IMR-90 (cell line): ENCODE measurements at regions of chr6 and their contacts with region 1.

Region 1: GRCh38 chr6:113122060-113122459 is 735.1 kb upstream of the MARCKS start:
- DNase-seq: peak; percentile 87
- ATAC-seq: peak; percentile 79
- H3K4me3 ChIP-seq: no peak overlapping the region
- H3K27ac ChIP-seq: no peak overlapping the region
- H3K4me1 ChIP-seq: peaks cover 13% of the 10 kb centered on the region
- H3K27me3 ChIP-seq: no peaks in the 10 kb centered on the region
- CTCF ChIP-seq: peak; percentile 56
- POLR2A ChIP-seq: no peak
- RAD21 ChIP-seq: peak; percentile 76

Region 2: DNA sequence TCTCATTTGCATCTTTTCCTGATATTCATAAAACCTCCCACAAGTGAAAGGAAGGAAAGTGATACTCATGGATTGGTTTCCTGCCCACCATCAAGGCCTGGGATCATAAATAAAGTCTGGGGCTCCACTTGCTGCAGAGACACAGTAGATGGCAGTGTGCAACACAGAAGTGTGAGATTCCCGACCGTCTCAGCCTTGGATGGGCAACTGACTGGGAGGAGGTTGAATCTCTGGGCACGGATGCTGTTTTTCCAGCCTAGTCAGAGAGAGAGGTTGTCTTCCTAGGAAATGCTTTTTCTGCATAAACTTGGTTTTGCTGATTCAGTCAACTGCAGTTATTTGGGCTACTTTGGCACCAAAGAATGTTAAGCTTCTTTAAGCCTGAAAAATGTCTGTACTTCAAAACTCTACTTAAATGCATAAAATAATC is 784.8 kb before region 1 on chr6:
- CTCF ChIA-PET with region 1: no interaction called
- POLR2A ChIA-PET with region 1: no interaction called
- dilution Hi-C with region 1: no loop called
- in situ Hi-C with region 1: no loop called
- intact Hi-C with region 1: loop called (anchors 1 kb)
- DNase-seq: peak; percentile 83
- ATAC-seq: peak; percentile 91
- H3K4me3 ChIP-seq: no peak overlapping the region
- H3K27ac ChIP-seq: no peak overlapping the region
- H3K4me1 ChIP-seq: peaks cover 4% of the 10 kb centered on the region
- H3K27me3 ChIP-seq: no peaks in the 10 kb centered on the region
- CTCF ChIP-seq: peak; percentile 78
- POLR2A ChIP-seq: no peak
- RAD21 ChIP-seq: peak; percentile 80

Region 3: DNA sequence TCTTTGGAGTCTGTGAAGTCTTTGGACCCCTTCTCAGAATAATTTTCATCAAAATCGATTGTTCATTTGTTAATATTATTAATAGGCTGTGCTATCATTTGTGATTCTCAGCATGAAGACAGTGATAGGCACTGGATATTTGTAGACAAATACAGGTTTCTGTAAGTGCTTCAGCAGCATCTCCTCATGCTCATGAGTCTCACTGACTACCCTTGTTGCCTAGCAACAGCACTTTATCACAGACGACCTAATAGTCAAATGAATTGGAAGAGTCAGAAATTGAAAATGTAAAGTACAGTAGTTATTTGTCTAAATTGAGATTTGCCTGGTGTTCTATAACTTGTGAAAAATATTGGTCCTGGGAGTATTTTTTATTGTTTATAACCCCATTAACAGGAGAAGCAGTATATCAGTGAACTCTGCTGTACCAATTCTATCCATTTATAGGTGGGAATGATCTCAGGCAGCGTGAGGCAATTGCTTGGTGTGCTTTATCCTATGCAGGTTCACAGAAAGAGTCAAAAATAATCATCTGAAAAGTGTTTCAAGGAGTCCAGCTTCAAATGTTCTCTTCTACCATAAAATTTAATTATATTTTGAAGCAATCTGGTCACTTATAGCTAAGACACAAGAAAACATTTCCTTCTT is 90.3 kb before region 1 on chr6:
- CTCF ChIA-PET with region 1: no interaction called
- POLR2A ChIA-PET with region 1: no interaction called
- dilution Hi-C with region 1: no loop called
- in situ Hi-C with region 1: no loop called
- intact Hi-C with region 1: no loop called
- DNase-seq: no peak
- ATAC-seq: no peak
- H3K4me3 ChIP-seq: no peak overlapping the region
- H3K27ac ChIP-seq: no peak overlapping the region
- H3K4me1 ChIP-seq: no peaks in the 10 kb centered on the region
- H3K27me3 ChIP-seq: no peaks in the 10 kb centered on the region
- CTCF ChIP-seq: no peak
- POLR2A ChIP-seq: no peak
- RAD21 ChIP-seq: no peak

Region 4: GRCh38 chr6:113160306-113161017 is 38.4 kb after region 1 on chr6:
- CTCF ChIA-PET with region 1: no interaction called
- POLR2A ChIA-PET with region 1: no interaction called
- dilution Hi-C with region 1: no loop called
- in situ Hi-C with region 1: no loop called
- intact Hi-C with region 1: no loop called
- DNase-seq: no peak
- ATAC-seq: no peak
- H3K4me3 ChIP-seq: no peak overlapping the region
- H3K27ac ChIP-seq: no peak overlapping the region
- H3K4me1 ChIP-seq: no peaks in the 10 kb centered on the region
- H3K27me3 ChIP-seq: no peaks in the 10 kb centered on the region
- CTCF ChIP-seq: no peak
- POLR2A ChIP-seq: no peak
- RAD21 ChIP-seq: no peak

Region 5: GRCh38 chr6:113381959-113382358 is 259.9 kb after region 1 on chr6:
- CTCF ChIA-PET with region 1: no interaction called
- POLR2A ChIA-PET with region 1: no interaction called
- dilution Hi-C with region 1: no loop called
- in situ Hi-C with region 1: no loop called
- intact Hi-C with region 1: loop called (anchors 5 kb)
- DNase-seq: peak; percentile 75
- ATAC-seq: no peak
- H3K4me3 ChIP-seq: no peak overlapping the region
- H3K27ac ChIP-seq: no peak overlapping the region; the same call in 1 of the 2 replicates
- H3K4me1 ChIP-seq: peaks cover 9% of the 10 kb centered on the region
- H3K27me3 ChIP-seq: no peaks in the 10 kb centered on the region
- CTCF ChIP-seq: no peak
- POLR2A ChIP-seq: no peak
- RAD21 ChIP-seq: no peak

Region 6: DNA sequence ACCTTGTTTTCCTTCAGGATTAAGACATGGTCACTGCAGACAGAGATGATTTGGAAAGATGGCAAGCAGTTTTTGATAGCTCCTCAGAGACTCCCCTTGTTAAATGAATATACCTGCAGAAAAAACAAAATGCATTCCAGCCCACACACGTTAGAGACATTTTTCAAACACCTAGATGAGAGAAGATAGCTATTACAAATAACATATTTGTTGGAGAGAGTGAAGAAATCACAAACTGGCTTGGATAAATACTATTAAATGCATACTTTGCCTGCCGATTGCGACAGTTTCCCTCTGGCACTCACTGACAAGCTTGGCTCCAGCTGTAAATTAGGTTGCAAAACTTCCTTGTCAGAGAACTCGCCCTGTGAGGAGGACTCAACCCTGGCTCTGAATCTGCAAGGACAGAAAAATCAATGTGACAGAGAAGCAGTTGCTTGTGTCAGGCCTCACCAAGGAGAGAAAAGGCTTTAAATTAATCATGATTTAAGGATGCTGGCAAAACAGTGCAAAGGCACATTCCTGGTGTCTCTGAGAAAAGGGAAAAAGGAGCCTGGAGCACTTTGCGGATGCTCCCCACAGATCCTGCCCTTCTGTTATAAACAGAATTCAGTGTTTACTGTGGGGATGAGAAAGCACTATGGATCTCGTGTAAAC is 311.4 kb after region 1 on chr6:
- CTCF ChIA-PET with region 1: no interaction called
- POLR2A ChIA-PET with region 1: no interaction called
- dilution Hi-C with region 1: no loop called
- in situ Hi-C with region 1: no loop called
- intact Hi-C with region 1: loop called (anchors 10 kb)
- DNase-seq: peak; percentile 83
- ATAC-seq: peak; percentile 75
- H3K4me3 ChIP-seq: no peak overlapping the region
- H3K27ac ChIP-seq: peak overlapping the region; percentile 56; the same call in 1 of the 2 replicates
- H3K4me1 ChIP-seq: peaks cover 8% of the 10 kb centered on the region
- H3K27me3 ChIP-seq: no peaks in the 10 kb centered on the region
- CTCF ChIP-seq: no peak
- POLR2A ChIP-seq: no peak
- RAD21 ChIP-seq: no peak

Region 7: GRCh38 chr6:113564371-113565161 is 442.5 kb after region 1 on chr6:
- CTCF ChIA-PET with region 1: no interaction called
- POLR2A ChIA-PET with region 1: no interaction called
- dilution Hi-C with region 1: no loop called
- in situ Hi-C with region 1: no loop called
- intact Hi-C with region 1: loop called (anchors 10 kb)
- DNase-seq: peak; percentile 92
- ATAC-seq: peak; percentile 83
- H3K4me3 ChIP-seq: 0 out of 2 replicates have a peak overlapping the region, but pooled peaks have one; percentile 0
- H3K27ac ChIP-seq: peak overlapping the region; percentile 74
- H3K4me1 ChIP-seq: peaks cover 4% of the 10 kb centered on the region
- H3K27me3 ChIP-seq: no peaks in the 10 kb centered on the region
- CTCF ChIP-seq: no peak
- POLR2A ChIP-seq: no peak
- RAD21 ChIP-seq: no peak; the same call in 1 of the 2 replicates

Region 8: GRCh38 chr6:113672491-113673149 is 550.6 kb after region 1 on chr6:
- CTCF ChIA-PET with region 1: no interaction called
- POLR2A ChIA-PET with region 1: no interaction called
- dilution Hi-C with region 1: no loop called
- in situ Hi-C with region 1: no loop called
- intact Hi-C with region 1: loop called (anchors 10 kb)
- DNase-seq: peak; percentile 37
- ATAC-seq: peak; percentile 76
- H3K4me3 ChIP-seq: peak overlapping the region; percentile 22
- H3K27ac ChIP-seq: no peak overlapping the region
- H3K4me1 ChIP-seq: peaks cover 3% of the 10 kb centered on the region
- H3K27me3 ChIP-seq: peaks cover 2% of the 10 kb centered on the region; the same call in 1 of the 2 replicates
- CTCF ChIP-seq: no peak
- POLR2A ChIP-seq: no peak
- RAD21 ChIP-seq: no peak

Region 9: DNA sequence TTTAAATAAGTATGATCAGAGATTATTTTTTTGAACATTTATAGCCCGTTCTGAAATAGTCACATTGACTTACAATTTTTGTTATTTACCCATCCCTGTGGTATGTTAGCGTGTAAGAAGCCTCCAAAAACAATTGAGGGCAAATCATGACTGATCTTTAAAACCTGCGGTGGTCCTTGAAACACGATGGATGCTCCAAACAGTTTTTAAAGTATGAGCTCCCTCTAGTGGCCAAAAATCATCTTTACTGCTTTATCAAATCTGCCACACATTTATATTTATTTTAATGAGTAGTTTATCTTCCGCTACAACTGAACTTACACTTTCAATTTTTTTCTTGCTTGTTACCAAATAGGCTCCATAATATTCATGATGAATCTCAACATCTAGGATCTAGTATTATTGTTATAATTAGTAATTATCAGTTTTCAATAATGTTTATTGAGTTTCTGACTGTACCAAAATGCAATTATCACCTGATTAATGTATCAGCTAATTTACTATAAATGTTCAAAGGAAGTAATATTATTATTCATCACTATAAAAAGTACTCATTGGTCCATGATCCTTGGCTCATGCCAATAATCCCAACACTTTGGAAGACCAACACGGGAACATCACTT is 787.3 kb after region 1 on chr6:
- CTCF ChIA-PET with region 1: no interaction called
- POLR2A ChIA-PET with region 1: no interaction called
- dilution Hi-C with region 1: no loop called
- in situ Hi-C with region 1: no loop called
- intact Hi-C with region 1: loop called (anchors 2 kb)
- DNase-seq: peak; percentile 79
- ATAC-seq: peak; percentile 59
- H3K4me3 ChIP-seq: no peak overlapping the region
- H3K27ac ChIP-seq: no peak overlapping the region
- H3K4me1 ChIP-seq: peaks cover 2% of the 10 kb centered on the region
- H3K27me3 ChIP-seq: no peaks in the 10 kb centered on the region
- CTCF ChIP-seq: peak; percentile 76
- POLR2A ChIP-seq: no peak
- RAD21 ChIP-seq: peak; percentile 83